ENCODE measurements at regions of chr6 and their contacts with region 1.

Region 1: GRCh38 chr6:75526502-75527127 is 33.0 kb upstream of the FILIP1 start:
- DNase-seq: peak; percentile 76
- H3K4me3 Mint-ChIP-seq: no peak overlapping the region
- H3K27ac Mint-ChIP-seq: no peak overlapping the region
- H3K4me1 Mint-ChIP-seq: no peaks in the 10 kb centered on the region
- H3K27me3 Mint-ChIP-seq: peaks cover 14% of the 10 kb centered on the region

Region 2: DNA sequence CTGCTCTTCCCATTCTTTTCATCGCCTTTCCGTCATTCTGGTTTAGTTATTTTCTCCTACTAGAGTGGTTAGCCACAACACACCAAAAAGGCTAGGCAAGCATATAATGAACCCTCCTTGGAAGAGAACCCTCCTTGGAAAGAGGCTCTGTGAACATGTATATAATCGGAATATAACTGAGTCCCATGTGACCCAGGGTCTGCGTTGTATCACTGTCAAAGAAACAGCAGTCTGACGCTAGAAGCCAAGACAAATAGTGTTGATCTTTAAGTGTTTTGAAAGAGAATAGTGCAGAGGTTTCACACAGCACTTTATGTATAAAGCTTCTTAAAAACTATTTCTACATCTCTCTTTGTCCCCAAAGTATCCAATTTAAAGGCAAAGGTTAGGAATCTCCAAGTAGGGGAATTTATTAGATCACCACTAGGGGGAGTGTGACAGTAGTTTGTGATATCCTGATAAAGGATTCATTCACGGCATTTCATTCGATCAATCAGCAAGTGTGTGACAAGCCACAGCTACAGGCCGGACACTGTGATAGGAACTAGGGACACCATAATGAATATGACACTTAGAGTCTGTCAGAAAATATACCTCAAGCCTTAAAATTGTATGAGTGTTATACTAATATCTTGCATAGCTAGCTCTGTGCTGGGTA is 1435.3 kb before region 1 on chr6:
- CTCF ChIA-PET with region 1: no interaction called
- intact Hi-C with region 1: loop called (anchors 10 kb)
- DNase-seq: no peak
- H3K4me3 Mint-ChIP-seq: no peak overlapping the region
- H3K27ac Mint-ChIP-seq: no peak overlapping the region
- H3K4me1 Mint-ChIP-seq: no peaks in the 10 kb centered on the region
- H3K27me3 Mint-ChIP-seq: peaks cover 2% of the 10 kb centered on the region

Region 3: GRCh38 chr6:75266716-75267291 is 259.8 kb before region 1 on chr6:
- CTCF ChIA-PET with region 1: interaction called, 5 read pairs
- intact Hi-C with region 1: loop called (anchors 1 kb)
- DNase-seq: no peak
- H3K4me3 Mint-ChIP-seq: no peak overlapping the region
- H3K27ac Mint-ChIP-seq: no peak overlapping the region
- H3K4me1 Mint-ChIP-seq: peaks cover 38% of the 10 kb centered on the region
- H3K27me3 Mint-ChIP-seq: no peaks in the 10 kb centered on the region

Region 4: GRCh38 chr6:75296811-75297779 is 229.5 kb before region 1 on chr6:
- CTCF ChIA-PET with region 1: interaction called, 5 read pairs
- intact Hi-C with region 1: loop called (anchors 1 kb)
- DNase-seq: no peak
- H3K4me3 Mint-ChIP-seq: no peak overlapping the region
- H3K27ac Mint-ChIP-seq: no peak overlapping the region
- H3K4me1 Mint-ChIP-seq: peaks cover 2% of the 10 kb centered on the region
- H3K27me3 Mint-ChIP-seq: no peaks in the 10 kb centered on the region

Region 5: GRCh38 chr6:75368151-75368779 is 158.3 kb before region 1 on chr6:
- CTCF ChIA-PET with region 1: no interaction called
- intact Hi-C with region 1: loop called (anchors 5 kb)
- DNase-seq: peak; percentile 19
- H3K4me3 Mint-ChIP-seq: no peak overlapping the region
- H3K27ac Mint-ChIP-seq: no peak overlapping the region
- H3K4me1 Mint-ChIP-seq: no peaks in the 10 kb centered on the region
- H3K27me3 Mint-ChIP-seq: peaks cover 5% of the 10 kb centered on the region

Measured in activated naive CD4-positive, alpha-beta T cell treated with anti-CD3 and anti-CD28 coated beads for 36 hours (primary cell).